ENCODE measurements at regions of chr1 and their contacts with region 1.

Region 1: GRCh38 chr1:220356981-220357850 is 85.0 kb upstream of the RAB3GAP2 start:
- DNase-seq: no peak
- H3K4me3 ChIP-seq: no peak overlapping the region
- H3K27ac ChIP-seq: no peak overlapping the region
- H3K4me1 ChIP-seq: no peaks in the 10 kb centered on the region
- H3K27me3 ChIP-seq: no peaks in the 10 kb centered on the region
- CTCF ChIP-seq: no peak
- POLR2A ChIP-seq: no peak

Region 2: GRCh38 chr1:220420726-220421125 is 63.5 kb after region 1 on chr1:
- intact Hi-C with region 1: loop called (anchors 2 kb)
- DNase-seq: no peak
- H3K4me3 ChIP-seq: no peak overlapping the region
- H3K27ac ChIP-seq: no peak overlapping the region
- H3K4me1 ChIP-seq: no peaks in the 10 kb centered on the region
- H3K27me3 ChIP-seq: no peaks in the 10 kb centered on the region
- CTCF ChIP-seq: no peak
- POLR2A ChIP-seq: no peak